ENCODE measurements at regions of chr3 and their contacts with region 1.

Region 1: GRCh38 chr3:44198284-44199269 is 43.1 kb upstream of the TOPAZ1 start:
- DNase-seq: peak; percentile 64
- H3K4me3 ChIP-seq: no peak overlapping the region
- CTCF ChIP-seq: peak; percentile 92

Region 2: DNA sequence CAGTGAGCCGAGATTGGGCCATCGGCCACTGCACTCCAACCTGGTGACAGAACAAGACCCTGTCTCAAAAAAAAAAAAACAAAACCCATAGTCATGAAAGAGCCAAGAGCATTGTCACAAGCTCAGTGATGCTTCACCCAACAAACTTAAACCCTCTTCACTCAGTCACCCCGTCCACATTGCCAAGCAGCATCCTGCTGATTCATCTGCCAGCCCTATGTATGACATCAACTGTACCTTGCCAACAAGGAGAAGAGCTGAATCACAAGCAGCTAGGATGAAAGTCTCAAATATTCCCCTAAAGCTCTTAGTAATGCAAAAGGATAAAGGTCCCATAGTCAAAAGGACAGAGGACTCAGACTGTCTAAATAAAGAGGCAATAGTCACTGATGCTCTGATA is 666.7 kb before region 1 on chr3:
- in situ Hi-C with region 1: loop called (anchors 25 kb)
- DNase-seq: no peak
- H3K4me3 ChIP-seq: no peak overlapping the region
- CTCF ChIP-seq: no peak

Region 3: DNA sequence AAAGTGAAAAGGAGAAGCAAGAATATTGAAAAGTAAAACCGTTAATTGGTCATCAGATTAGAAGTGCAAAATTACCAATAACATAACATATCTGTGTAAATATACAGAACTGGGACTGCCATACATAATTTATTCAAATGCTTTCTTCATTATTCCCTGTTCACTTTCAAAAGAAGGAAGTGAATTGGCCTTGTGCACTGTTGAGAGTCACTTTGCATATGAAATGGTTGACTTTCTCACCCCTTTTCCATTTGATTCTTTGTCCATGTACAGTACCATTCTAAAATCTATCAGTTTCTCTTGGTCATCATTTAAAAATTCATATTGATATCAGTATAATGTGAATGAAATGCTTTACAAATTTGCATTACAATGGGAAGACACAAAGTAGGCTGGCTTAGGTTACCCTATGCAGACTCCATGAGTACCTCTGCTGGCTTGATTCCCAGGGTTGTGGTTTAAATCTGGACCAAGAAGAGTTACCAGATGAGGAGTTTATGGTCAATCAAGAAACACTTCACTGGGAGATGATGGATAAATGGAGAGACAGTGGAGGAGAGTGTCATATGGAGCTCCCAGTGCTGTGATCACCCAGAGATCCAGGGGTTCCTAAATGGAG is 167.8 kb before region 1 on chr3:
- in situ Hi-C with region 1: no loop called
- DNase-seq: peak; percentile 62
- H3K4me3 ChIP-seq: no peak overlapping the region
- CTCF ChIP-seq: no peak

Region 4: DNA sequence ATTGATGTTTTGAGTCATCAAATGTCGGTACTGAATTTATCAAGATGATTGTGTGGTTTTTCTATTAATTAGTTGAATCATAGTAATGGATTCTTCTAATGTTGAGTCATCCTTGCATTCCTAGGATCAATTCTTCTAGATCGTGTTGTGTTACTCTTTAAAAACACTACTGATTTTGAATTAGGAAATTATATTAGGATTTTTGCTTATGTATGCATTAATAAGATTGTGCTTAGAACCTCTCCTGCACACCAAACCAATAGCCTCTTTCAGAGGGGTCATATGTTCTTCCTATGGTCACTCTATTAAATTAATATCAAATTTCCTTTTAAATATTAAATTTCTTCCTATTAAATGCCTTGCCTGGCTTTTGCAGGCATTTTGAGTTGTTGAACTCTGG is 108.5 kb before region 1 on chr3:
- in situ Hi-C with region 1: no loop called
- DNase-seq: no peak
- H3K4me3 ChIP-seq: no peak overlapping the region
- CTCF ChIP-seq: no peak

Measured in astrocyte of the cerebellum (primary cell).